ENCODE measurements at regions of chr19 and their contacts with region 1.

Region 1: DNA sequence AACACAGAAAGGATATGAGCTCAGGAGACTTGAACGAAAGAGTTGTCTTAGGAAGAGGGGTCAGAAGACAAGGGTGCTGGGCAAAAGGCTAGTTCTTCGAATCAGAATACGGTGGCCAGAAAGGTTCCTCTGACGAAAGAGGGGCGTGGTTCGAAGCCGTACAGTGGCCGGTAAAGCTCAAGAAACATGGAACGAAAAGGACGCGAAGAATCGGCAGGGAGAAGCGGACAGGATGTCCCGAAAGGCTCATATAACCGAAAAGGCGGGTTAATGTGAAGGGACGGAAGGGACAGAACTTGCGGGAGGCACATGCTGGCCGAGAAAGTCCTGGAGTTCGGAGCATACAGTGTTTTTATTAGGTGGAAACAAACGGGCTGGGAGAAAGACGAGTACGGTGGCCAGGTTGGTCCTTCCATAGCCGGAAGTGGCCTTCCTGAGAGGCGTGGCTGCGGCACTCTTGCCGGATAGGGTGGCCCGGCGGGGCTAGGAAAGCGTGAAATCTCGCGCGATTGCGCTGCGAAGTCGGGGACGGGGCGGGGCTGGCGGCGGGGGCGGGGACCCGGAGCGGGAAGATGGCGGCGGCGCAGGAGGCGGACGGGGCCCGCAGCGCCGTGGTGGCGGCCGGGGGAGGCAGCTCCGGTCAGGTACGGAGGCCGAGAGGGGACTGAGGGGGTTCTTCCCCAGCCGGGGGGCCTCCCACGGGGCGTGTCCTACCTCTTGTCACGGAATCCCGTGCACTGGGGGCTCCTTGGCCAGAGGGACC is at the start of gene CLPTM1:
- DNase-seq: peak; percentile 99
- ATAC-seq: peak; percentile 94
- H3K4me3 Mint-ChIP-seq: peak within 1 kb of the TSS; percentile 95
- H3K27ac Mint-ChIP-seq: peak within 1 kb of the TSS; percentile 100
- H3K4me1 Mint-ChIP-seq: peaks cover 39% of the 10 kb centered on the region
- H3K27me3 Mint-ChIP-seq: no peaks in the 10 kb centered on the region
- total RNA-seq, gene CLPTM1: 41.6 to 44.1 TPM

Region 2: DNA sequence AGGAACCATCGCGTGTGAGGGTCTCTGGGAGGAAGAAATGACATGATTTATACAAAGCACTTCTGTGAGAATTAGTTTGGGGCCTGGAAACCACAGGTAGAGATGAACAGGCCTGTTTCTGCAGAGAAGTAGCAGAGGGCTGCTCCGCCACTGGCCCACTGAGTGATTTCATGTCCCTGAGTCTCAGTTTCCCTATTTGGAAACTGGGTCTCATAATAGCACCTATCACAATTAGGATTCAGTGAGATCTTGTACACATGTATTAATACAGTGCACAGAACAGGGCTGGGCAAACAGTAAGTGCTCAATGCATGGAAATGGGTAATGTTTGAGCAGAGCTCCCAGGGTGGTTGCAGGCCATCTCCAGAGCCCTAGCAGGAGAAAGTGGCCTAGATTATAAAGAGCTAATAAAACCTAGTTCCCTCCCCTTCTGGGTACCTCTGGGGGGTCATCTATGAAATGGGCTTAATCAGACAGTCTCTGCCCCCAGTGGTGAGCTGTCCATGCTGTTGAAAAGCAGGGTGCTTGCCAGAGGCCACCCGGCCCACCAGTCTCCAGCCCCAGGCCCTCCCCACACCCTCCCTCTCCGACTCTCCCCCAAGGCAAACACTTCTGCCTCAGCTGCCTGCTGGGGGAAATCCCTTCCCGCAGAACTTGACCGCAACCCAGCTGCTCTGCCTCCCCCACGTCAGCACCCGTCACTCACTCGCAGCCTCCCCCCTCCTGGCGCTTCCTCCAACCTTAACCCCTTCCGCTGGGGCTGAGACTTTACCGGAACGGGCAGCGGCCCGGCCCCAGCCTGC is 202.0 kb before region 1 on chr19:
- CTCF ChIA-PET with region 1: no interaction called
- POLR2A ChIA-PET with region 1: interaction called, 5 read pairs
- intact Hi-C with region 1: loop called in 1 of 2 experiments (anchors 1 kb)
- DNase-seq: peak; percentile 98
- ATAC-seq: peak; percentile 79
- H3K4me3 Mint-ChIP-seq: peak overlapping the region; percentile 94
- H3K27ac Mint-ChIP-seq: peak overlapping the region; percentile 97
- H3K4me1 Mint-ChIP-seq: peaks cover 54% of the 10 kb centered on the region
- H3K27me3 Mint-ChIP-seq: no peaks in the 10 kb centered on the region

Region 3: GRCh38 chr19:44890366-44891015 is 64.5 kb before region 1 on chr19:
- CTCF ChIA-PET with region 1: interaction called, 3 read pairs
- POLR2A ChIA-PET with region 1: interaction called, 3 read pairs
- intact Hi-C with region 1: loop called (anchors 1 kb)
- DNase-seq: no peak
- ATAC-seq: peak; percentile 84
- H3K4me3 Mint-ChIP-seq: peak overlapping the region; percentile 74
- H3K27ac Mint-ChIP-seq: peak overlapping the region; percentile 96
- H3K4me1 Mint-ChIP-seq: peaks cover 29% of the 10 kb centered on the region
- H3K27me3 Mint-ChIP-seq: no peaks in the 10 kb centered on the region

Region 4: DNA sequence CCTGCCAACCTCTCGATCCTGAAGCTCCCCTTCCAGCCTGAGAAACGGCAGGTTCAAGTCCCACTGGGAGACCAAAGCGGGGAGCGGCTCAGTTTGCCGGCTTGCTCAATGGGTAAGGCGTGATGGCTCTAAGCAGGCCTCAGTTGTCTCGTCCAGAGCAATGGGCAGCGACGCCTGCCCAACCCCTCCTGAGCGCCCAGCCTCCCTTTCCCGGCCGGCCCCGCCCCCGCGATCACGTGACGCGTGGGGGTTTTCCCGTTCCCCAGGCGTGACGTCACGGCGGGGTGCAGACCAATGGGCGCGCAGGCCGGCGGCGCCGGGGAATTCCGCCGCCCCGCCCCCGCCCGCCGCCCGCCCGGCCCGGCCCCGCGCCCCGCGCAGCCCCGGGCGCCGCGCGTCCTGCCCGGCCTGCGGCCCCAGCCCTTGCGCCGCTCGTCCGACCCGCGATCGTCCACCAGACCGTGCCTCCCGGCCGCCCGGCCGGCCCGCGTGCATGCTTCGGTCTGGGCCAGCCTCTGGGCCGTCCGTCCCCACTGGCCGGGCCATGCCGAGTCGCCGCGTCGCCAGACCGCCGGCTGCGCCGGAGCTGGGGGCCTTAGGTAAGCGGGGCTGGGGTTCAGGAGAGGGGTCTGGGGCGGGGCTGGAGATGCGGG is 46.2 kb after region 1 on chr19 and contains the start of gene RELB:
- CTCF ChIA-PET with region 1: interaction called, 3 read pairs
- POLR2A ChIA-PET with region 1: interaction called, 4 read pairs
- intact Hi-C with region 1: loop called in 1 of 2 experiments (anchors 1 kb)
- DNase-seq: peak; percentile 97
- ATAC-seq: peak; percentile 53
- H3K4me3 Mint-ChIP-seq: peak within 1 kb of the TSS; percentile 94
- H3K27ac Mint-ChIP-seq: peak within 1 kb of the TSS; percentile 97
- H3K4me1 Mint-ChIP-seq: peaks cover 16% of the 10 kb centered on the region
- H3K27me3 Mint-ChIP-seq: no peaks in the 10 kb centered on the region
- total RNA-seq, gene RELB: 43.8 to 51.2 TPM

Region 5: GRCh38 chr19:45092747-45093678 is 138.0 kb after region 1 on chr19 and contains the start of gene PPP1R37:
- CTCF ChIA-PET with region 1: no interaction called
- POLR2A ChIA-PET with region 1: no interaction called
- intact Hi-C with region 1: loop called in 1 of 2 experiments (anchors 1 kb)
- DNase-seq: peak; percentile 95
- ATAC-seq: peak; percentile 71
- H3K4me3 Mint-ChIP-seq: peak within 1 kb of the TSS; percentile 89
- H3K27ac Mint-ChIP-seq: peak within 1 kb of the TSS; percentile 97
- H3K4me1 Mint-ChIP-seq: peaks cover 54% of the 10 kb centered on the region
- H3K27me3 Mint-ChIP-seq: no peaks in the 10 kb centered on the region
- total RNA-seq, gene PPP1R37: 12.5 to 14.1 TPM

Region 6: DNA sequence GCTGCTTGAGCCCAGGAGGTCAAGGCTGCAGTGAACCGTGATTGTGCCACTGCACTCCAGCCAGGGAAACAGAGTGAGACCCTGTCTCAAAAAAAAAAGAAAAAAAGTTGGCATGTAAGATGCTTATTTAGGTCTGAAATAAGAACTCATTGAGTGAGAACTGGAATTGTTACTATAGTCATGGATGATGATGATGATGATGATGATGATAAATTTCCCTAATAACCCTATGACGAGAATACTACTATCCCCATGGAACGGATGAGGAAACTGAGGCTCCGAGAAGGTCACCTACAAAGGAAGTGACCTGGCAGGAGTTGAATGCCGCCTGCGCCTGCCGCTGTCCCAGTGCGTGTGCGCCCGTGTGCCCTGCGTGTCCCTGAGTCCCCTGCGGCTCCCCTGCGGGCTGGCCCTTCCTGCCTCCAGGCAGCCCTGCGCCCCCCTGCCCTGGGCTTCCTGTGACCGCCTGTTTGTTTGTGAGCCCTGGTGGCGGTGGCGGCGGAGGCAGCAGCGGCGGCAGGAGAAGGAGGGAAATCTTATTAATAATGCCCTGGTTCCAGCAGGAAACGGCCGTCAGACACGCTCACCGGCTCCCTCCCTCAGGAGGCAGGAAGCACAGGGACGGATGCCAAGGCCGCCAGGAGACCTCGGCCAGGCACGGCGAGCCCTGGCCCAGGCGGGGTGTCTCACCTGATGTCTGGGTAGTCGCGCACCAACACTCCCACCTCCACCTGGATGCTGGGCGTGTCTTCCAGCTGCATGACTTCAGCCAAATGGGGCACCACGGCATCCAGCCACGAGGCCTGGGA is 260.6 kb after region 1 on chr19:
- CTCF ChIA-PET with region 1: no interaction called
- POLR2A ChIA-PET with region 1: no interaction called
- intact Hi-C with region 1: no loop called
- DNase-seq: no peak
- ATAC-seq: no peak
- H3K4me3 Mint-ChIP-seq: no peak overlapping the region
- H3K27ac Mint-ChIP-seq: no peak overlapping the region
- H3K4me1 Mint-ChIP-seq: peaks cover 2% of the 10 kb centered on the region
- H3K27me3 Mint-ChIP-seq: peaks cover 36% of the 10 kb centered on the region

Region 7: GRCh38 chr19:45469132-45469944 is 514.3 kb after region 1 on chr19:
- CTCF ChIA-PET with region 1: no interaction called
- POLR2A ChIA-PET with region 1: no interaction called
- intact Hi-C with region 1: loop called in 1 of 2 experiments (anchors 2 kb)
- DNase-seq: peak; percentile 97
- ATAC-seq: peak; percentile 82
- H3K4me3 Mint-ChIP-seq: peak overlapping the region; percentile 78
- H3K27ac Mint-ChIP-seq: peak overlapping the region; percentile 86
- H3K4me1 Mint-ChIP-seq: peaks cover 29% of the 10 kb centered on the region
- H3K27me3 Mint-ChIP-seq: peaks cover 11% of the 10 kb centered on the region